Naive thymus-derived CD4-positive, alpha-beta T cell (primary cell): ENCODE measurements at regions of chr22 and their contacts with region 1.

Region 1: DNA sequence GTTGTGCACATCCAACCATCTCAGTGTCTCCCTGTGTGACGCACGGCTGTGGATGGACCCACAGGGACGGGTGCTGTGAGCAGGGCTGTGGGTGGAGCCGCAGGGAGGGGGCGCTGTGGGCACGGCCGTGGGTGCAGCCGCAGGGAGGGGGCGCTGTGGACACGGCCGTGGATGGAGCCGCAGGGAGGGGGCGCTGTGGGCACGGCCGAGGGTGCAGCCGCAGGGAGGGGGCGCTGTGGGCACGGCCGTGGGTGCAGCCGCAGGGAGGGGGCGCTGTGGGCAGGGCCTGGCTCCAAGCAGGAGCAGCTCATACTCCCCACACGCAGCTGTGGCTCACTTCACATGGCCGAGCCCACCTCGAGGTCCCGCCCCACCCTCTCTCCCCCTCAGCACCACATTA is 6.0 kb upstream of the MAPK11 start:
- DNase-seq: peak in 2 of 9 donors; percentile 22 to 27
- ATAC-seq: peak; percentile 86
- H3K4me3 ChIP-seq: no peak overlapping the region
- H3K4me3 Mint-ChIP-seq: no peak overlapping the region
- H3K27ac ChIP-seq: no peak overlapping the region
- H3K27ac Mint-ChIP-seq: no peak overlapping the region
- H3K4me1 ChIP-seq: peaks cover 3 to 4% of the 10 kb centered on the region in 2 donors
- H3K4me1 Mint-ChIP-seq: peaks cover 0 to 12% (median 5%) of the 10 kb centered on the region in 7 donors
- H3K27me3 ChIP-seq: no peaks in the 10 kb centered on the region
- H3K27me3 Mint-ChIP-seq: peaks cover 0 to 12% (median 0%) of the 10 kb centered on the region in 5 donors

Region 2: GRCh38 chr22:50233223-50233622 is 42.9 kb before region 1 on chr22:
- CTCF ChIA-PET with region 1: no interaction called
- POLR2A ChIA-PET with region 1: no interaction called
- intact Hi-C with region 1: no loop called
- DNase-seq: no peak
- ATAC-seq: no peak
- H3K4me3 ChIP-seq: no peak overlapping the region
- H3K4me3 Mint-ChIP-seq: no peak overlapping the region
- H3K27ac ChIP-seq: no peak overlapping the region
- H3K27ac Mint-ChIP-seq: no peak overlapping the region
- H3K4me1 ChIP-seq: no peaks in the 10 kb centered on the region
- H3K4me1 Mint-ChIP-seq: peaks cover 6 to 32% (median 25%) of the 10 kb centered on the region in 7 donors
- H3K27me3 ChIP-seq: no peaks in the 10 kb centered on the region
- H3K27me3 Mint-ChIP-seq: no peaks in the 10 kb centered on the region

Region 3: GRCh38 chr22:50306753-50307749 is 30.9 kb after region 1 on chr22 and contains the start of gene PLXNB2:
- CTCF ChIA-PET with region 1: no interaction called
- POLR2A ChIA-PET with region 1: no interaction called
- intact Hi-C with region 1: loop called in 1 of 2 experiments (anchors 5 kb)
- DNase-seq: peak in 3 of 9 donors; percentile 12 to 47 (median 31)
- ATAC-seq: peak; percentile 22
- H3K4me3 ChIP-seq: no peak within 1 kb of the TSS
- H3K4me3 Mint-ChIP-seq: peak within 1 kb of the TSS in 5 of 10 donors; percentile 25 to 70 (median 44)
- H3K27ac ChIP-seq: no peak within 1 kb of the TSS
- H3K27ac Mint-ChIP-seq: no peak within 1 kb of the TSS
- H3K4me1 ChIP-seq: peaks cover 0 to 5% of the 10 kb centered on the region in 2 donors
- H3K4me1 Mint-ChIP-seq: peaks cover 0 to 17% (median 7%) of the 10 kb centered on the region in 7 donors
- H3K27me3 ChIP-seq: peaks cover 0 to 4% of the 10 kb centered on the region in 2 donors
- H3K27me3 Mint-ChIP-seq: peaks cover 6 to 18% (median 13%) of the 10 kb centered on the region in 5 donors
- total RNA-seq, gene PLXNB2: 2.9 to 138 (median 12.6) TPM

Region 4: GRCh38 chr22:50314455-50315288 is 38.5 kb after region 1 on chr22:
- CTCF ChIA-PET with region 1: no interaction called
- POLR2A ChIA-PET with region 1: no interaction called
- intact Hi-C with region 1: loop called (anchors 2 to 5 kb)
- DNase-seq: peak; percentile 44 to 71 (median 60)
- ATAC-seq: peak; percentile 94
- H3K4me3 ChIP-seq: peak overlapping the region; percentile 53
- H3K4me3 Mint-ChIP-seq: peak overlapping the region; percentile 76 to 92 (median 87)
- H3K27ac ChIP-seq: peak overlapping the region; percentile 64
- H3K27ac Mint-ChIP-seq: peak overlapping the region; percentile 79 to 97 (median 88)
- H3K4me1 ChIP-seq: peaks cover 14 to 17% of the 10 kb centered on the region in 2 donors
- H3K4me1 Mint-ChIP-seq: peaks cover 9 to 18% (median 12%) of the 10 kb centered on the region in 7 donors
- H3K27me3 ChIP-seq: no peaks in the 10 kb centered on the region
- H3K27me3 Mint-ChIP-seq: no peaks in the 10 kb centered on the region

Region 5: GRCh38 chr22:50474668-50475492 is 198.7 kb after region 1 on chr22 and contains the start of gene SBF1:
- CTCF ChIA-PET with region 1: no interaction called
- POLR2A ChIA-PET with region 1: no interaction called
- intact Hi-C with region 1: loop called in 1 of 2 experiments (anchors 10 kb)
- DNase-seq: peak; percentile 75 to 94 (median 85)
- ATAC-seq: peak; percentile 89
- H3K4me3 ChIP-seq: peak within 1 kb of the TSS; percentile 72
- H3K4me3 Mint-ChIP-seq: peak within 1 kb of the TSS; percentile 93 to 100 (median 96)
- H3K27ac ChIP-seq: peak within 1 kb of the TSS; percentile 90
- H3K27ac Mint-ChIP-seq: peak within 1 kb of the TSS; percentile 91 to 97 (median 93)
- H3K4me1 ChIP-seq: peaks cover 39 to 42% of the 10 kb centered on the region in 2 donors
- H3K4me1 Mint-ChIP-seq: peaks cover 29 to 56% (median 47%) of the 10 kb centered on the region in 7 donors
- H3K27me3 ChIP-seq: no peaks in the 10 kb centered on the region
- H3K27me3 Mint-ChIP-seq: peaks cover 0 to 19% (median 0%) of the 10 kb centered on the region in 5 donors
- total RNA-seq, gene SBF1: 161 to 209 (median 181) TPM